ENCODE measurements at regions of chr2 and their contacts with region 1.

Region 1: GRCh38 chr2:30231212-30231995 is at the start of gene LBH:
- DNase-seq: peak; percentile 66 to 78
- H3K4me3 ChIP-seq: peak within 1 kb of the TSS; percentile 67 to 81 (median 70)
- H3K27ac ChIP-seq: 0 out of 2 replicates have a peak within 1 kb of the TSS, but pooled peaks have one; percentile 7
- H3K4me1 ChIP-seq: peaks cover 0 to 9% (median 5%) of the 10 kb centered on the region in 4 experiments; a peak in 4 of 7 replicates
- H3K27me3 ChIP-seq: peaks cover 3 to 25% (median 20%) of the 10 kb centered on the region in 4 experiments
- CTCF ChIP-seq: no peak
- EP300 ChIP-seq: no peak
- POLR2A ChIP-seq: peak; percentile 95 to 97
- RAD21 ChIP-seq: no peak
- total RNA-seq, gene LBH: 24.6 and 25.7 TPM in 2 replicates

Region 2: DNA sequence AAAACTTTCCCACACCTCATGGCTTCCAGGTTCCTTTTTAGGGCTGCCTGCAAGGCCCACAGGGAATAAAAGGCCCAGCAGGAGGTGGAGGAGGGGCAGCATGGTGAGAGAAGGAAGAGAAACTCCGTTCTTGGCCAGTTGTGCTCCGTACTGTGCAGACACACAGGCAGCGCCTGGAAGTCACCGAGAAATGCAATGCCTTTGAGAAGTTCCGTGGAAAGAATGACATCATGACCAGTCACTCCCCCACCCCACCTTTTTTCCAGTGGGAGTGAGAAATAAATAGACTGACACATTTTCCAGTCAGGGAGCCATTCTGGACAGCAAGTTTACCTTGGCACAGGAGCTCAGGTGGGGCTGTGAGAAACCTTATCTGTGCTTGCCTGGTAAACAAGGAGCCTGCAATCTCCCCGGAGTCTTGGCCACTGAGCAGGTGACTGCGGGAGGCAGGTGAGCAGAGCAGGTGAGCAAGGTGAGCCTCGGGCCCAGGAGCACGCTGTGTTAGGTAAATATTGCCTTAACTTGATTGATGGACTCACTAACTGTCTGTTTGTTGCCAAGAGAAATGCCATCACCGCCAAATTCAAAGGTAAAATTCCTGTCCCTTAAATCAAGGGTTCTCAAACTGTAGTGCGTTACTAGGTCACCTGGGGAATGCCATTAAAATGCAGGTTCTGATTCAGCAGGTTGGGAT is 13.6 kb before region 1 on chr2:
- CTCF ChIA-PET with region 1: interaction called, 9 read pairs
- POLR2A ChIA-PET with region 1: interaction called, 15 read pairs
- DNase-seq: no peak
- H3K4me3 ChIP-seq: no peak overlapping the region
- H3K27ac ChIP-seq: no peak overlapping the region
- H3K4me1 ChIP-seq: peaks cover 0 to 9% (median 2%) of the 10 kb centered on the region in 4 experiments; a peak in 4 of 7 replicates
- H3K27me3 ChIP-seq: no peaks in the 10 kb centered on the region
- CTCF ChIP-seq: no peak
- EP300 ChIP-seq: no peak
- POLR2A ChIP-seq: no peak
- RAD21 ChIP-seq: no peak